PC-9 (cell line): ENCODE measurements at regions of chr1 and their contacts with region 1.

Region 1: DNA sequence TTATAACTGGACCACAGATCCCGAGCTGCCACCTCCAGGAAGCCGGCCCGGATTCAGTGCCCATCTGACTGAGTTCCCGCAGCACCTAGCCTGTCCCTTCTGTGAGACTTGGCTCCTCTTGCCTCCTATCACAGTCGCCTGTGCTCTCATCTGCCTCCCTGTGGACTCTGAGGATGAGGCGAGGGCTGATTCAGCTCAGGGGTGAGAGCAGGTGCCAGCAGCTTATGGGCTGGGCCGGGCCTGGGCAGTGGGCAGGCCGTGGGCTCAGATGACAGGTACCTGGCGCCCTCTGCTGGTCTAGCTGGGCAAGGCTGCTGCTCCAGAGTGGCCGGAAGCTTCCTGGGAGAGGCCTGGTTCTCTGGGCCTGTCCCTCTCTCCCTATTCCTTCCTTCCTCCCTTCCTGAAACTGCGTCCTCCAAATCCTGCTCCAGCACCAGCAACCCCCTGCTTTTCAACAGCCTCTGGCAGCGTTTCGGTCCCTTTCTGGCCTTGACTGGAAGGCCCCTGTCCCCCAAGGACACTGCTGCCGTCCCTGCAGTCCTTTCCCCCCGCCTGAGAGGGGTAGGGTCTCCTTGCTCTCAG is 17.3 kb upstream of the PCSK9 start:
- DNase-seq: peak; percentile 82 to 92
- H3K4me3 ChIP-seq: no peak overlapping the region
- H3K27ac ChIP-seq: no peak overlapping the region
- H3K4me1 ChIP-seq: no peaks in the 10 kb centered on the region
- H3K27me3 ChIP-seq: no peaks in the 10 kb centered on the region
- CTCF ChIP-seq: peak; percentile 93

Region 2: GRCh38 chr1:53771648-53772047 is 1250.4 kb before region 1 on chr1:
- CTCF ChIA-PET with region 1: no interaction called
- POLR2A ChIA-PET with region 1: interaction called, 13 read pairs
- intact Hi-C with region 1: no loop called
- DNase-seq: no peak
- H3K4me3 ChIP-seq: no peak overlapping the region
- H3K27ac ChIP-seq: no peak overlapping the region
- H3K4me1 ChIP-seq: no peaks in the 10 kb centered on the region
- H3K27me3 ChIP-seq: no peaks in the 10 kb centered on the region
- CTCF ChIP-seq: no peak

Region 3: GRCh38 chr1:54671985-54672608 is 350.0 kb before region 1 on chr1:
- CTCF ChIA-PET with region 1: interaction called, 4 read pairs
- POLR2A ChIA-PET with region 1: no interaction called
- intact Hi-C with region 1: loop called (anchors 1 kb)
- DNase-seq: peak; percentile 52 to 73
- H3K4me3 ChIP-seq: no peak overlapping the region
- H3K27ac ChIP-seq: no peak overlapping the region
- H3K4me1 ChIP-seq: no peaks in the 10 kb centered on the region
- H3K27me3 ChIP-seq: no peaks in the 10 kb centered on the region
- CTCF ChIP-seq: peak; percentile 94

Region 4: DNA sequence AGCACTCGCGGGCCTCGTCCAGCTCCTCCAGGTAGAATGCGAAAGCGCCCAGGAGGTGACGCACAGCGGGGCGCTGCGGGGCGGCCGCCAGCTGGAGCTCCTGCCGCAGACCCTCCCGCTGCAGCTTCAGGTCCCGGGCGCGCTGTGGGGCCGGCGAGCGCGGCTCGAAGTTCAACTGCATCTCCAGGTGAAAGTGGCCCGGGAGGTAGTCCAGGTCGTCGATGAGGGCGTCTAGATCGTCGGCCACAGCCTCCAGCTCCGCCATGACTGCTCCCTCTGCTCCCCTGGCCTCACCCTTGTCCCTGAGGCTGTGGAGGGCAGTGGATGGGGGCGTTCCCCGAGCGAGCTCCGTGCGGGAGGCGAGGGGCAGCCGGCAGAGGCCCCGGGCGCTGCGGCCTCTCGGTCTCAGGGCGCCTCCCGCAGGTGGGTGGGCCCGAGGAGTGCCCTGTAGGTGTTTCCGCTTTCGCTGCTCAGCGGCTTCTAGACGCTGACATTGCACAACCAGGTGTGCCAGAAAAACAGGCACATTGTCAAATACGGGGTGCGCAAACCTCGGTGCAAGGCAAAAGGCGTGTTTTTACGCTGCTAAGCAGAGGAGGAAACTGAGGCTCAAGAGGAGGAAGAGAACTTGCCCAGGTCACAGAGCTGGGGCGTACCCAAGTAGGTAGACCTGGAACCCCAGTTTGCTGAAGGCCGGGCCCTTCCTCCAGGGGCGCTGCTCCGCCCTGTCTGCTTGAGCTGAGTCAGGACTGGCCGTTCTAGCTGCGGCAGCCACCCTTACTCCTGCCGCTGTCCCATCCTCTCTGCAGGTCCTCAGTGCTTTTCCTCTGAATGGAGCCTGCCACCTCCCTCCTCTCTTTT is 220.9 kb before region 1 on chr1 and contains the start of gene TTC22:
- CTCF ChIA-PET with region 1: no interaction called
- POLR2A ChIA-PET with region 1: no interaction called
- intact Hi-C with region 1: loop called (anchors 10 kb)
- DNase-seq: peak; percentile 72 to 87
- H3K4me3 ChIP-seq: peak within 1 kb of the TSS; percentile 86
- H3K27ac ChIP-seq: peak within 1 kb of the TSS; percentile 76
- H3K4me1 ChIP-seq: peaks cover 79% of the 10 kb centered on the region
- H3K27me3 ChIP-seq: no peaks in the 10 kb centered on the region
- CTCF ChIP-seq: peak; percentile 72
- total RNA-seq, gene TTC22: 24.1 and 26.3 TPM in 2 replicates

Region 5: GRCh38 chr1:54950369-54951163 is 71.5 kb before region 1 on chr1:
- CTCF ChIA-PET with region 1: interaction called, 31 read pairs
- POLR2A ChIA-PET with region 1: interaction called, 4 read pairs
- intact Hi-C with region 1: loop called (anchors 1 kb)
- DNase-seq: peak; percentile 72 to 77
- H3K4me3 ChIP-seq: no peak overlapping the region
- H3K27ac ChIP-seq: no peak overlapping the region
- H3K4me1 ChIP-seq: peaks cover 63% of the 10 kb centered on the region
- H3K27me3 ChIP-seq: no peaks in the 10 kb centered on the region
- CTCF ChIP-seq: peak; percentile 84

Region 6: DNA sequence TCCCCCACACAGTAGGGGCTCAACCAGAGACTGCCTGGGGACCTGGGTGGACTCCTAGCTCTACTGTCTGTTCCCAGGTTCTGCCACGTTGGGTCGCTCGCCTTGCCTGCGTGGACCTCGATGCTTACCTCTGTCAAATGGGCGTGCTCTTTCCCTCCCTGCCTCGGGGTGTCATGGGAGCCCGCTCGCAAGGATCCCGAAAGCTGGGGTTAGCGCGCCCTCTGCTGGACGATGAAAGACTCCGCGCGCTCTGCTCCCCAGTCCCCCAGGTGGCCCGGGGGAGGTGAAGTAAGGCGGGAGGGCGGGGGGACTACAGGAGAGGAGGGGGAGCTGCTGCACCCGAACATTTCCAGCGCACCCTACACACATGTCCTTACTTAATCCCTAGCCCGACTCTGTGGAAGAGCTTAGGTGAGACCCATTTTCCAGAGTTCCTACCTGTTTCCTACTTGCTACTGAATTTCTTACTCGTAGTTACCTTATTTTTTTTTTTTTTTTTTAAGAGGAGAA is 25.6 kb before region 1 on chr1:
- CTCF ChIA-PET with region 1: interaction called, 4 read pairs
- POLR2A ChIA-PET with region 1: no interaction called
- intact Hi-C with region 1: loop called (anchors 2 kb)
- DNase-seq: peak; percentile 39 to 81
- H3K4me3 ChIP-seq: peak overlapping the region; percentile 41; the same call in 1 of the 2 replicates
- H3K27ac ChIP-seq: no peak overlapping the region
- H3K4me1 ChIP-seq: 0 out of 2 replicates have a peak, but pooled peaks cover 4% of the 10 kb centered on the region
- H3K27me3 ChIP-seq: no peaks in the 10 kb centered on the region
- CTCF ChIP-seq: peak; percentile 95

Region 7: DNA sequence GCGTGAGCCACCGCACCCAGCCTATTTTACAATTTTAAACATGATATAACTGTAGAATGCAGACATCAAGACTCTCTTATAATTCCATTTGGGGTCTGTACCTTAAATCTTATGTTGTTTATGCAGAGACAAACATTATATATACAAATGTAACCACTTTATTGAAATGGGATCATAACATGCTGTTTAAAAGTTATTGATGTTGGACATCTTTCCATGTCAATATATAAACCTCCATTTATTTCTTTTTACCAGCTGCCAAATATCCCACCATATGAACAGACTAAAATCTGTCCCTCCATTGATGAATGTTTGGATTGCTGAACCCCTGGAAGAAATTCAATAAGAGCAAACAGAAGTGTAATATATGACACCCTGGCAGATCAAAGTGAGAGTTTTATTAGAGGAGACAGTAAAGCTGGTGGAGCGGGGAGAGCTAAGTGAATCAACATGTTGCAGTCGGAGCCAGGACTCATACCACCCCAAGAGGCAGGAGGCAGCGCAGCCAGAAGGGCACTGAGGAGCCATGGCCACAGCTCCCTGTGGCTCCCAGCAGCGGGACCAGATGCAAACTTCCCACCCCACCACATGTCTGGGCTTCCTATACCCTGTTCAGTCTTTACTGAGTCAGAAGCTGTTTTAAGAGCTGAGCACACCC is 12.5 kb after region 1 on chr1:
- CTCF ChIA-PET with region 1: no interaction called
- POLR2A ChIA-PET with region 1: no interaction called
- intact Hi-C with region 1: no loop called
- DNase-seq: no peak
- H3K4me3 ChIP-seq: no peak overlapping the region
- H3K27ac ChIP-seq: no peak overlapping the region
- H3K4me1 ChIP-seq: peaks cover 23% of the 10 kb centered on the region
- H3K27me3 ChIP-seq: 0 out of 2 replicates have a peak, but pooled peaks cover 4% of the 10 kb centered on the region
- CTCF ChIP-seq: no peak

Region 8: GRCh38 chr1:55064071-55064581 is 42.1 kb after region 1 on chr1:
- CTCF ChIA-PET with region 1: no interaction called
- POLR2A ChIA-PET with region 1: no interaction called
- intact Hi-C with region 1: no loop called
- DNase-seq: no peak
- H3K4me3 ChIP-seq: no peak overlapping the region
- H3K27ac ChIP-seq: peak overlapping the region; percentile 50
- H3K4me1 ChIP-seq: no peaks in the 10 kb centered on the region; the same call in 1 of the 2 replicates
- H3K27me3 ChIP-seq: no peaks in the 10 kb centered on the region
- CTCF ChIP-seq: no peak

Region 9: GRCh38 chr1:55584526-55585401 is 562.7 kb after region 1 on chr1:
- CTCF ChIA-PET with region 1: no interaction called
- POLR2A ChIA-PET with region 1: no interaction called
- intact Hi-C with region 1: no loop called
- DNase-seq: no peak
- H3K4me3 ChIP-seq: no peak overlapping the region
- H3K27ac ChIP-seq: no peak overlapping the region
- H3K4me1 ChIP-seq: peaks cover 27% of the 10 kb centered on the region
- H3K27me3 ChIP-seq: no peaks in the 10 kb centered on the region
- CTCF ChIP-seq: no peak; the same call in 1 of the 2 replicates